Stomach (tissue), 19 donors: ENCODE measurements at regions of chr17 and their contacts with region 1.

Region 1: DNA sequence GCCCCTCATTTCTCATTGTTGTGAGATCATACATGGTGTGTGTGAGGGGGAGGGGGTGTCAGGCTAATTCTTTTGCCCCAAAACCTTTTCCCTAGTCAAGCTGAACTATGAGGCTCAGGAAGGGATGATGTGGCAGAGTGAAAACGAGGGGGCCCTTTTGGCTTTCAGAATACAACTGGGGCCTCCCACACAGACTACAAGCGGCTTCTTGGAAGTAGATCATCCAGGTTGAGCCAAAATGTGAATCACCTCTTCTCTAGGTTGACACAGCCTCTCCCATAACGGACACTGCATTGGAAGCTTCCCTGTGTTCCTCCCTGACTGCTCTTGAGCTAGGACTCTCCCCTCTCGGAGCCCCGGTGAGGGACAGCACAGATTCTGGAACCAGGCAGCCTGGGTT is 2.3 kb upstream of the ALKBH5 start:
- DNase-seq: peak in 1 of 2 donors; percentile 52
- H3K4me3 ChIP-seq: no peak overlapping the region
- H3K27ac ChIP-seq: peak overlapping the region in 3 of 5 donors; percentile 96 to 99 (median 98)
- H3K4me1 ChIP-seq: peaks cover 26 to 54% (median 37%) of the 10 kb centered on the region in 4 donors
- H3K27me3 ChIP-seq: no peaks in the 10 kb centered on the region
- CTCF ChIP-seq: no peak
- EP300 ChIP-seq: no peak
- POLR2A ChIP-seq: no peak

Region 2: GRCh38 chr17:18225121-18225566 is 43.8 kb after region 1 on chr17:
- intact Hi-C with region 1: loop called (anchors 2 kb)
- DNase-seq: peak; percentile 98
- H3K4me3 ChIP-seq: peak overlapping the region; percentile 35 to 72 (median 66)
- H3K27ac ChIP-seq: peak overlapping the region in 4 of 5 donors; percentile 0 to 73 (median 70)
- H3K4me1 ChIP-seq: peaks cover 16 to 26% (median 22%) of the 10 kb centered on the region in 4 donors
- H3K27me3 ChIP-seq: no peaks in the 10 kb centered on the region
- CTCF ChIP-seq: no peak
- EP300 ChIP-seq: no peak
- POLR2A ChIP-seq: no peak